Activated CD4-positive, alpha-beta T cell treated with anti-CD3 and anti-CD28 coated beads for 36 hours (primary cell): ENCODE measurements at regions of chr3 and their contacts with region 1.

Region 1: DNA sequence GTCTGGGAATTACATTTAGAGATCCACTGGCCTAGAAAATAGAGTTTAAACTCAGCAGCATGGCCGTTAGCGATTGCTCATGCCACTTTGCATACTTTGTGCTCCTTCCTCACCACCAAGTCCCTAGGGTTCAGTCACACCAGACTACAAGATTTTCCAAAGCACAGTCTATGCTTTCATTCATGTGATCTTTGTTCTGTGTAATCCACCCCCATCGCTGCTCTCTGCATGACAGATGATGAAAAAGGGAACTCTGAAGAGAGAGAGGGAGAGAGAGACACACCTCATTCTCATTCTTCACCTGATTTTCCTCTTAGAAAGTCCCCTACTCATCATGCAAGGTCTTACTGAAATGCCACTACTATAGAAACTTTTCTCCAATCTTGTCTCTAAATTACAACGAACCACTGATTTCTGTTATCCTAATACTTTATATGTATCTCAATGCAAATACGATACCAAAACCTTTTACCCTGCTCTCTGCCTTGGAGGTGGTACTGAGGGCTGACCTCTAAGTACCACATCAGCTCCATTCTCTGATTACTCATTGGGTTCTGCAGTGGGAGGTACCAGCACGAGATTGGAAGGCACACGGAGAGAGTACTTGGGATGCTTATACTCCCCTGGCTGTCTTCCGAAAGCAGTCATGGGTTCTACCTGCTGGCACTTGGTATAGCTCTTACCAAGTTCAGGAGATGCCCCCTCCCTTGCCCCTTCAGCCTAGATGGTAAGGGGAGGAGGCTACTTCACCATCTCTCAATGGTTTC is 1.1 kb upstream of the PARP15 start:
- DNase-seq: peak; percentile 78
- ATAC-seq: peak; percentile 90
- H3K4me3 Mint-ChIP-seq: peak overlapping the region; percentile 24
- H3K27ac Mint-ChIP-seq: peak overlapping the region; percentile 87
- H3K4me1 Mint-ChIP-seq: peaks cover 58% of the 10 kb centered on the region
- H3K27me3 Mint-ChIP-seq: no peaks in the 10 kb centered on the region

Region 2: GRCh38 chr3:122564155-122564912 is 12.0 kb before region 1 on chr3 and contains the starts of genes DTX3L and PARP9:
- CTCF ChIA-PET with region 1: interaction called, 5 read pairs
- POLR2A ChIA-PET with region 1: interaction called, 5 read pairs
- intact Hi-C with region 1: loop called (anchors 1 kb)
- DNase-seq: peak; percentile 89
- ATAC-seq: peak; percentile 83
- H3K4me3 Mint-ChIP-seq: peak within 1 kb of the TSS; percentile 83
- H3K27ac Mint-ChIP-seq: peak within 1 kb of the TSS; percentile 97
- H3K4me1 Mint-ChIP-seq: peaks cover 67% of the 10 kb centered on the region
- H3K27me3 Mint-ChIP-seq: no peaks in the 10 kb centered on the region
- total RNA-seq, gene DTX3L: 42.0 to 52.0 TPM
- total RNA-seq, gene PARP9: 39.9 to 46.0 TPM

Region 3: GRCh38 chr3:122754929-122755328 is 178.6 kb after region 1 on chr3:
- CTCF ChIA-PET with region 1: no interaction called
- POLR2A ChIA-PET with region 1: no interaction called
- intact Hi-C with region 1: no loop called
- DNase-seq: peak; percentile 18
- ATAC-seq: peak; percentile 87
- H3K4me3 Mint-ChIP-seq: no peak overlapping the region
- H3K27ac Mint-ChIP-seq: no peak overlapping the region
- H3K4me1 Mint-ChIP-seq: no peaks in the 10 kb centered on the region
- H3K27me3 Mint-ChIP-seq: no peaks in the 10 kb centered on the region